CD4-positive, alpha-beta T cell (primary cell): ENCODE measurements at regions of chr10 and their contacts with region 1.

Region 1: GRCh38 chr10:46092524-46093081 is 46.5 kb upstream of the MSMB start:
- DNase-seq: peak in 6 of 14 experiments; percentile 30 to 86 (median 55)
- ATAC-seq: peak; percentile 48
- H3K4me3 ChIP-seq: peak overlapping the region; percentile 74
- H3K4me3 Mint-ChIP-seq: no peak overlapping the region
- H3K27ac ChIP-seq: peak overlapping the region; percentile 55 to 82
- H3K27ac Mint-ChIP-seq: no peak overlapping the region
- H3K4me1 ChIP-seq: peaks cover 82% of the 10 kb centered on the region
- H3K4me1 Mint-ChIP-seq: peaks cover 10% of the 10 kb centered on the region
- H3K27me3 ChIP-seq: no peaks in the 10 kb centered on the region
- H3K27me3 Mint-ChIP-seq: no peaks in the 10 kb centered on the region
- CTCF ChIP-seq: no peak

Region 2: DNA sequence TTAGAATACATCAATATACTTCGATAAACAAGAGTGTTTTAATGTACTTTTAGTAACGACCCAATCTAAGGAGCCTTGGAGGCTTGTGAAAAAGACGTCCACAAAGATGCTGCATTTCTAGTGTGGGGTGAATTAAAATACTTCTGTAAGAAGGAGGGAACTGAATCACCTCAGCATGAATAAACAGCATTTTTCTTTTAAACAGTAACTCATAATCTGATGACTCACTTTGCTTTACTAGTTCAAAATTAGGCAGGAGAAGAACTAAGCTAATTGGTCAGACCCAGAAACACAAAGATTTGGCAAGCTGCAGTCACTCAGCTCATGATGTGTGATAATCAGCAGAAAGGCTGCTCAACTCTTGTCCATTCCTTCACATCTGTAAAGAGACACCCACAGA is 86.4 kb before region 1 on chr10:
- CTCF ChIA-PET with region 1: no interaction called
- POLR2A ChIA-PET with region 1: no interaction called
- intact Hi-C with region 1: no loop called
- DNase-seq: no peak
- ATAC-seq: no peak
- H3K4me3 ChIP-seq: no peak overlapping the region
- H3K4me3 Mint-ChIP-seq: no peak overlapping the region
- H3K27ac ChIP-seq: no peak overlapping the region
- H3K27ac Mint-ChIP-seq: peak overlapping the region; percentile 40
- H3K4me1 ChIP-seq: no peaks in the 10 kb centered on the region
- H3K4me1 Mint-ChIP-seq: no peaks in the 10 kb centered on the region
- H3K27me3 ChIP-seq: no peaks in the 10 kb centered on the region
- H3K27me3 Mint-ChIP-seq: no peaks in the 10 kb centered on the region
- CTCF ChIP-seq: no peak

Region 3: GRCh38 chr10:46077731-46078413 is 14.7 kb before region 1 on chr10:
- CTCF ChIA-PET with region 1: no interaction called
- POLR2A ChIA-PET with region 1: interaction called, 26 read pairs
- intact Hi-C with region 1: no loop called
- DNase-seq: peak in 1 of 14 experiments; percentile 15
- ATAC-seq: no peak
- H3K4me3 ChIP-seq: no peak overlapping the region
- H3K4me3 Mint-ChIP-seq: peak overlapping the region; percentile 12
- H3K27ac ChIP-seq: peak overlapping the region in 1 of 2 donors; percentile 64
- H3K27ac Mint-ChIP-seq: peak overlapping the region; percentile 72
- H3K4me1 ChIP-seq: peaks cover 21% of the 10 kb centered on the region
- H3K4me1 Mint-ChIP-seq: peaks cover 55% of the 10 kb centered on the region
- H3K27me3 ChIP-seq: no peaks in the 10 kb centered on the region
- H3K27me3 Mint-ChIP-seq: no peaks in the 10 kb centered on the region
- CTCF ChIP-seq: no peak

Region 4: DNA sequence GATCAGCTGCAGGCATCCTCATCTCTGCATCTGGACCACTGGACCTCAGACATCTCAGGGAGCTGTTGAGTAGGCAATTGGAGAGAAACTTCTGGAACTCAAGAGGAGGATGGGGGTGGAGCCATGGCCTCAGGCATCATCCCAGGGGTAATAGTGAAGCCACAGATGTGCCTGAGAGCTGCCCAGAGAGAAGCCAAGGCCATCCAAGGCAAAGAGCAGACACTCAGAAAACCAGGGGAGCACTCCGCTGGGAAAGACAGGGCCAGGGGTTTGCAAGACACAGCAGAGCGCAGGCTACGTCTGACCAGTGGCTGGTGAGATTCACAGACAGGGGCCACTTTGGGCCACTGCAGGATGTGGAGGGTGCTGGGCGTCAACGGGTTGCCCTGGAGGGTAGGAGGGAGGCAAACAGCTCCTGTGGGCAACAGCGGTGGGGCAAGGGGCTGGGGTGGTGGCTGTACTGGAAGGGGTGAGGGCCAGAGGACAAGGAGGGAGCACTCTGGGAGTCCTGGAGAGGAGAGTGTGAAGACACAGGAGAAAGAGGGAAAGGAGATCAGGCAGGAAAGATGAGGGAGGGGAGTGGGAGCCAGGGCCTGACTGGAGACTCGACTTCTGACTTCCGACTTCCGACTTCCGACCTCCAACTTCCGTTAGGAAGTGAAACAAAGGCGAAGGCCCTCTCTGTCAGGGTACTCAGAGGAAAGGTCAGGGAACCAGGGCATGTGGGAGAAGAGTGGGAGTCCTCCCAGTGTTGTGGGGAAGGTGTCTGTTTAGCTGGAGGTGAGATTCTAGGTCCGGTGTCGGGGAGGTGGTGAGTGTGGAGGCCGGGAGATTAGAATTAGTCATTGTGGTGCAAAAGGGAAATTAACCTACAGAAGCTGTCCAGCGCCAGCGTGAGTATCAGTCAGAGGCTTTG is 124.5 kb after region 1 on chr10:
- CTCF ChIA-PET with region 1: no interaction called
- POLR2A ChIA-PET with region 1: no interaction called
- intact Hi-C with region 1: no loop called
- DNase-seq: no peak
- ATAC-seq: no peak
- H3K4me3 ChIP-seq: no peak overlapping the region
- H3K4me3 Mint-ChIP-seq: no peak overlapping the region
- H3K27ac ChIP-seq: no peak overlapping the region
- H3K27ac Mint-ChIP-seq: no peak overlapping the region
- H3K4me1 ChIP-seq: peaks cover 3% of the 10 kb centered on the region
- H3K4me1 Mint-ChIP-seq: peaks cover 29% of the 10 kb centered on the region
- H3K27me3 ChIP-seq: no peaks in the 10 kb centered on the region
- H3K27me3 Mint-ChIP-seq: no peaks in the 10 kb centered on the region
- CTCF ChIP-seq: no peak